GM10248 (cell line): ENCODE measurements at regions of chr16 and their contacts with region 1.

Region 1: GRCh38 chr16:46673320-46674013 is 15.5 kb downstream of the VPS35 start:
- DNase-seq: peak; percentile 66
- CTCF ChIP-seq: peak; percentile 92

Region 2: DNA sequence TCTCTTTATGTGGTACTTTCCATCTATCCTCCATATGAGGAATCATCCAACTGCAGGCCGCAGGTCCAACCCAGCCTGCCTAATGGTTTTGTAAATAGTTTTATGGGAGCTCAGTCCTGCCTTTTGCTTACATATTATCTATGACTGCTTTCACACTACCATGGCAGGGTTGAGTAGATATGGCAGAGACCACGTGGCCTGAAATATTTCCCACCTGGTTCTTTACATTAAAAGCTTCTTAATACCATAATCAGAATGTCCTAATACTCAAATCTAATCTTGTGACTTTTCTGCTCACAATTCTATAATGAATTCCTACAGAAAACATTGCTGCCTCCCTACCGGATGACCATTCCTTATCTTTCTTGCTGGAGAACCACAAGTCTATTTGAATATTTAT is 124.0 kb before region 1 on chr16:
- CTCF ChIA-PET with region 1: no interaction called
- POLR2A ChIA-PET with region 1: no interaction called
- DNase-seq: no peak
- CTCF ChIP-seq: no peak

Region 3: GRCh38 chr16:46583036-46583435 is 90.4 kb before region 1 on chr16:
- CTCF ChIA-PET with region 1: no interaction called
- POLR2A ChIA-PET with region 1: no interaction called
- DNase-seq: no peak
- CTCF ChIP-seq: no peak

Region 4: GRCh38 chr16:46658925-46659324 is 14.5 kb before region 1 on chr16:
- CTCF ChIA-PET with region 1: interaction called, 31 read pairs
- POLR2A ChIA-PET with region 1: no interaction called
- DNase-seq: peak; percentile 61
- CTCF ChIP-seq: no peak

Region 5: DNA sequence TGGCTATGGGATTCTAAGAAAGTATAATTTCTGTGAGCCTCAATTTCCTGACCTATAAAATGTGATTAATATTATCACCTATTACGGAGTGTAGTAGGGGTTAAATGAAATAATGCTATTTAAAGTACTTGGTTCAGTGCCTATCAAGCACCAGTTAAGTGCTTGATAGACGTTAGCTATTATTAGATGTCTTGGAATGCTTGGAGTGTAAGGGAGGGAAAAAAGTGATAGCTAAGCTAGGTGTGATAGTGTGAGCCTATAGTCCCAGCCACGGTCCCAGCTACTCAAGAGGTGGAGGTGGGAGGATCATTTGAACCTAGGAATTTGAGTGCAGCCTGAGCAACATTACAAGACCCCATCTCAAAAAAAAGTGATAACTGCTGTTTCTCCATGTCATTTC is 23.5 kb after region 1 on chr16:
- CTCF ChIA-PET with region 1: interaction called, 21 read pairs
- POLR2A ChIA-PET with region 1: no interaction called
- DNase-seq: no peak
- CTCF ChIP-seq: no peak

Region 6: DNA sequence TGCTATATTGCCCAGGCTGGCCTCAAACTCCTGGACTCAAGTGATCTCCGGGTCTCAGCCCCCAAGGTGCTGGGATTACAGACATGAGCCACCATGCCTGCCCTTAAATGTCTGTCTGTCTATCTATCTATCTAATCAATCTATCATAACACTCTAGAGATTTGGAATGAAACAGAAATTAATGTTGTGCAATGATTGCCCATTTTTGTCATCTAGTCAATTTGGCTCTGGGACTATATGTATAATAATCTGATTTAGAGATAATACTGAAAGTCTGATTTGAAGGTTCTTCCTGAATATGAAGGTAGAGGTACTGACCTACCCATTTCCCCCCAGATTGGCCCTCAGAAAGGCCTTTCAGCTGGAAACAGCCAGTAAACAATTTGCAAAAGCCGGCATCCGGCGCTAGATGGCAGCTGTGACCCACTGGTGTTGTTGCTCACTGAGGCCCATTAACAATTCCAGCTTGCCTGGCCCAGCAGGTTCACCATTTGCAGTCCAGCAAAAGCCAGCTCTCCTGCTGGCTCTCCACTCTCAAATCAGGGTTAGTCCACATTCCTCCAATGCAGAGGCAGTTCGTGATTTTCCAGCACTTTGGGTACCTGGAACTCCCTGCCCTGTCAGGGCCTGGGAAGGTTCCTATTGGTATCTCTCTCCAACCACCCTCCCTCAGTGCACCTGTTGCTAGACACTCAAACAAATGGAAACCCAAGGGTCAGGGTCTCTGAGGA is 180.4 kb after region 1 on chr16:
- CTCF ChIA-PET with region 1: interaction called, 13 read pairs
- POLR2A ChIA-PET with region 1: no interaction called
- DNase-seq: peak; percentile 78
- CTCF ChIP-seq: peak; percentile 65

Region 7: DNA sequence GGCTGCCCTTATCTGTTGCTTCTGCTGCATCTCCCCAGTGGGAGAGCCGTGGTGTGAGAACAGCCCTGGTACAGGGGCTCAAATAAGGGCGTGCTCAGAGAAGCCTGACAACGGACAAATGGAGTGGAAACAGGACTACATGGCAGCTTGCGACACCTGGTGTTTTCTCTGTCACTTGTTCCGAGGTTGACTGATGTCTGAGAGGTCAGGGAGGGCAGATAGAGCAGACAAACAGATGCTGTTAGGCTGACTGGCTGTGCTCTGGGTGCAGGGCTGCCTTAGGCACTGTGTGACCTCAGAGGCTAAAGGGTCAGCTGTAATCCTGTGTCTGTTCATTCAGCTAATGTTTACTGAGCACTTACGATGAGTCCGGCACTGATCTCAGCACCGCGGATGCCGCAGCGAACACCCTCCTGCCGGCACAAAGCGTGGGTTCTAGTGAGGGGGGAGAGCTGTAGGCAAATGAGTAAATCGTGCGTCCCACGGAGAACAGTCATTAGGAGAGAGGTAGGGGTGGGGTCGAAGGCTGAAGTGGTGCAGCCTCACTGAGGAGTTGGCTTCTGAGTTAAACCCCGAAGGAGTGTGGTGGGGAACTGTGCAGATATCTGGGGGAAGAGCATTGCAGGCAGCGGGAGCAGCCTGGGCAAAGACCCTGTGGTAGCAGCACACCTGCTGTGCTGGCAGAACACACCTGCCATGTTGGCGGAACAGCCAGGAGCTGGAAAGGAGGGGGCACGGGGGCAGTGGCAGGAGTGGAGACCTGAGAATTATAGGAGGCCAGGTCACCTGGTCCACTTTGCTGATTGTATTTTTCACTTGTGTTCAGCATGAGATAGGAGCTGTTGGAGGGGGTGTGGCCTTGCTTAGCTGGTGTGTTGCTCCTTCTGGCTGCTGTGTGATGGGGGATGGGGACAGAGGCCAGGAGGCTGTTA is 245.7 kb after region 1 on chr16:
- CTCF ChIA-PET with region 1: interaction called, 35 read pairs
- POLR2A ChIA-PET with region 1: no interaction called
- DNase-seq: peak; percentile 86
- CTCF ChIP-seq: peak; percentile 49

Region 8: DNA sequence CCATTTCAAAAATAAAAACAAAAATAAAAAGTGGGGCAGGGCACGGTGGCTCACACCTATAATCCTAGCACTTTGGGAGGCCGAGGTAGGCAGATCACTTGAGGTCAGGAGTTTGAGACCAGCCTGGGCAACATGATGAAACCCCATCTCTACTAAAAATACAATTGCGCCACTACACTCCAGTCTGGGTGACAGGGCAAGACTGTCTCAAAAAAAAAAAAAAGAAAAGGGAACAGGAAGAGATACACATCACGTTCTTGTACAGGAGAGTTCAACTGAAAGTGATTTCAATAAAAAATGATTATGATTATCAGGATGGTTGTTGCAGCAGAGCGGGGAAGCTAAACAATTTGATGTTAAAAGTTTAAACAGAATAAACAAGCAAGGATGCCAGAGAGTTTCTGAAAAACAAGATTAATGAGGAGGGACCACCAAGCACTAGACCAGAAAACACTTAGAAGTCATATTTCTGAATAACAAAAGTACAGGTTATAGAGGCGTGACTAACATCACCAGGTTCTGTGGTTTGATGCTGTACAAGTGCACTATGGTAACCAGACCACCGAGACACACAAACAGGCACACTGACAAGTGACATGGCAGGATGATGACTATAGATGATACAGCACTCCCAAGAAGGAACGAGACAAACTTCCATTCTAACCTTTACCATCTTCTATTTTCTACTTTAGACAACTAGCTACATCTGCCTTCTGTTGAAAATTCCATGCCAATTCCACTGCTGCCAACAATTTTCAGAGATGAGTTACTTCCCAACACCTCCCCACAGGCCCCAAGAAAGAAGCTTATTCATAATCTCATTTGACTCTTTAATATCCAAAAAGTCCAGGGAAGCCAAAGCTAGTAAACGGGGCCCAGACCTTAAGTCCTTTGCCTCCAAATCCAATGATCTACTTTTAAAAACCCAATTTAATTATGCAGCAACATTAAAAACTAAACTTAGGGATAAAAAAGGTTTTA is 288.2 kb after region 1 on chr16:
- CTCF ChIA-PET with region 1: interaction called, 12 read pairs
- POLR2A ChIA-PET with region 1: no interaction called
- DNase-seq: no peak
- CTCF ChIP-seq: no peak